ENCODE measurements at regions of chr6 and their contacts with region 1.

Region 1: GRCh38 chr6:79544939-79545450 is 7.8 kb upstream of the LCA5 start:
- DNase-seq: peak; percentile 90 to 93
- H3K4me3 ChIP-seq: no peak overlapping the region
- H3K4me3 Mint-ChIP-seq: peak overlapping the region; percentile 42
- H3K27ac Mint-ChIP-seq: peak overlapping the region; percentile 69
- H3K4me1 ChIP-seq: peaks cover 22% of the 10 kb centered on the region
- H3K4me1 Mint-ChIP-seq: peaks cover 14% of the 10 kb centered on the region
- H3K27me3 ChIP-seq: no peaks in the 10 kb centered on the region
- H3K27me3 Mint-ChIP-seq: no peaks in the 10 kb centered on the region
- CTCF ChIP-seq: peak; percentile 40 to 74

Region 2: GRCh38 chr6:79302341-79302740 is 242.7 kb before region 1 on chr6:
- CTCF ChIA-PET with region 1: no interaction called
- POLR2A ChIA-PET with region 1: no interaction called
- intact Hi-C with region 1: loop called (anchors 5 kb)
- DNase-seq: no peak
- H3K4me3 ChIP-seq: no peak overlapping the region
- H3K4me3 Mint-ChIP-seq: no peak overlapping the region
- H3K27ac Mint-ChIP-seq: peak overlapping the region; percentile 68
- H3K4me1 ChIP-seq: peaks cover 48% of the 10 kb centered on the region
- H3K4me1 Mint-ChIP-seq: peaks cover 15% of the 10 kb centered on the region
- H3K27me3 ChIP-seq: no peaks in the 10 kb centered on the region
- H3K27me3 Mint-ChIP-seq: no peaks in the 10 kb centered on the region
- CTCF ChIP-seq: no peak

Region 3: DNA sequence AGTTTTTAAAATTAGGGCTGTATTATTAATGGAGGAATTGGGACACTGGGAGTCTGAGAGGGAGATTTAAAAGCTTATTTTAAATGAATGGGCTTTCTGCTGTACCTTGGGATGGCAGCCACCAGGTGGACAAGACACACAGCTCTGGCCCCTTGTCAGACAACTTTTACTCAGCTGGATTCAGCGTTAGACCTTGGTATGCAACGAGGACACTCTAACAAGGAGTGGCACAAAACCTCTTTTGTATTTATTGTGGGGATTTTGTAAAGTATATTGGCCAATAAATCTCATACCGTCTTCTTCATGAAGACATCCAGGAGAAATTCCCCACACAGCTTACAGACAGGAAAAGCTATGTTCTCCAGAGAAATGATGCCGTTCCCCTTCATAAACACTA is 113.5 kb before region 1 on chr6:
- CTCF ChIA-PET with region 1: interaction called, 3 read pairs
- POLR2A ChIA-PET with region 1: no interaction called
- intact Hi-C with region 1: loop called (anchors 1 kb)
- DNase-seq: peak; percentile 61 to 69
- H3K4me3 ChIP-seq: no peak overlapping the region
- H3K4me3 Mint-ChIP-seq: peak overlapping the region; percentile 10
- H3K27ac Mint-ChIP-seq: peak overlapping the region; percentile 41
- H3K4me1 ChIP-seq: peaks cover 37% of the 10 kb centered on the region
- H3K4me1 Mint-ChIP-seq: peaks cover 24% of the 10 kb centered on the region
- H3K27me3 ChIP-seq: no peaks in the 10 kb centered on the region
- H3K27me3 Mint-ChIP-seq: no peaks in the 10 kb centered on the region
- CTCF ChIP-seq: peak; percentile 62 to 67

Region 4: GRCh38 chr6:79525272-79526100 is 19.5 kb before region 1 on chr6:
- CTCF ChIA-PET with region 1: no interaction called
- POLR2A ChIA-PET with region 1: interaction called, 5 read pairs
- intact Hi-C with region 1: loop called (anchors 1 kb)
- DNase-seq: peak; percentile 87 to 93
- H3K4me3 ChIP-seq: peak overlapping the region; percentile 17
- H3K4me3 Mint-ChIP-seq: peak overlapping the region; percentile 68
- H3K27ac Mint-ChIP-seq: peak overlapping the region; percentile 84
- H3K4me1 ChIP-seq: peaks cover 52% of the 10 kb centered on the region
- H3K4me1 Mint-ChIP-seq: peaks cover 32% of the 10 kb centered on the region
- H3K27me3 ChIP-seq: no peaks in the 10 kb centered on the region
- H3K27me3 Mint-ChIP-seq: no peaks in the 10 kb centered on the region
- CTCF ChIP-seq: no peak

Region 5: DNA sequence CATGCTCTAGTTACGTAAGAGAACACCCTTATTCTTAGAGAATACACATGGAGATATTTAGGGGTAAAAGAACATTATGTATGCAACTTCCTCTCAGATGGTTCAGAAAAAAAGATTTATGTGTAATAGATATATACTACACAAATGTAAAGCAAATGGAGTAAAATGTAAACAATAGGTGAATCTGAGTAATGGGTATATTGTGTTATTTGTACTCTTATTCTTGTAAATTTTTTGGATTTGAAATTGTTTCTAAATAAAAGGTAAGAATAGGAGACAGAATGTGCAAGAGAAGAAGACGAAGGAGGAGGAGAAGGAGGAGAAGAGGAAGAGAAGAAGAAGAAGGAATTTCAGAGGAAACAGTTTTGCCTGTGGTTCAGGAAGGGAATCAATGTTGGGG is 14.7 kb after region 1 on chr6:
- CTCF ChIA-PET with region 1: no interaction called
- POLR2A ChIA-PET with region 1: no interaction called
- intact Hi-C with region 1: no loop called
- DNase-seq: no peak
- H3K4me3 ChIP-seq: no peak overlapping the region
- H3K4me3 Mint-ChIP-seq: no peak overlapping the region
- H3K27ac Mint-ChIP-seq: peak overlapping the region; percentile 16
- H3K4me1 ChIP-seq: no peaks in the 10 kb centered on the region
- H3K4me1 Mint-ChIP-seq: peaks cover 5% of the 10 kb centered on the region
- H3K27me3 ChIP-seq: no peaks in the 10 kb centered on the region
- H3K27me3 Mint-ChIP-seq: no peaks in the 10 kb centered on the region
- CTCF ChIP-seq: no peak

Region 6: DNA sequence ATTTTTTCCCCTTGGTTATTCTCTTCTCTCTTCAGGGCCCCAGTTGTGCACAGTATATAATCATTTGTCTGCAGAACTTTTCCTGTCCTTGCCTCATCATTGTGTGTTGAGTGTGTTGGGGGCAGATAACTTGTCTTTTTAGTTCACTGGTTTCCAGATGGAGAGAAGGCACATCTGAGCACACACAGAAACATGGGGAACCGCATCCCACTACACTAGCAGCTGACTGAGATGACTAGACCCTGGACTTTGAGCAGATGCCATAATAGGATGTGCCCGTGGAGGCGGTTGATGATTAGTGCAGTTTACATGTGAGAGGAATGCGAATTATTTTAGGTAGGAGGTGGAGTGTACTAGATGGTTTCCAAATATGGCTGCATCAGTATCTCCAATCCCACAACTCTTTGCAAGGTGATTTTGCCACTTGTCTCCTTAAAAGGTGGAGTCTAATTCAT is 59.6 kb after region 1 on chr6:
- CTCF ChIA-PET with region 1: no interaction called
- POLR2A ChIA-PET with region 1: interaction called, 3 read pairs
- intact Hi-C with region 1: loop called (anchors 2 kb)
- DNase-seq: peak; percentile 82 to 90
- H3K4me3 ChIP-seq: no peak overlapping the region
- H3K4me3 Mint-ChIP-seq: peak overlapping the region; percentile 18
- H3K27ac Mint-ChIP-seq: peak overlapping the region; percentile 80
- H3K4me1 ChIP-seq: peaks cover 96% of the 10 kb centered on the region
- H3K4me1 Mint-ChIP-seq: peaks cover 62% of the 10 kb centered on the region
- H3K27me3 ChIP-seq: no peaks in the 10 kb centered on the region
- H3K27me3 Mint-ChIP-seq: no peaks in the 10 kb centered on the region
- CTCF ChIP-seq: no peak

Region 7: GRCh38 chr6:79630883-79631692 is 86.1 kb after region 1 on chr6 and contains the start of gene SH3BGRL2:
- CTCF ChIA-PET with region 1: no interaction called
- POLR2A ChIA-PET with region 1: interaction called, 10 read pairs
- intact Hi-C with region 1: no loop called
- DNase-seq: peak; percentile 88 to 89
- H3K4me3 ChIP-seq: peak within 1 kb of the TSS; percentile 90
- H3K4me3 Mint-ChIP-seq: peak within 1 kb of the TSS; percentile 95
- H3K27ac Mint-ChIP-seq: peak within 1 kb of the TSS; percentile 94
- H3K4me1 ChIP-seq: peaks cover 32% of the 10 kb centered on the region
- H3K4me1 Mint-ChIP-seq: peaks cover 27% of the 10 kb centered on the region
- H3K27me3 ChIP-seq: no peaks in the 10 kb centered on the region
- H3K27me3 Mint-ChIP-seq: no peaks in the 10 kb centered on the region
- CTCF ChIP-seq: no peak
- total RNA-seq, gene SH3BGRL2: 102 and 106 TPM in 2 replicates

Region 8: DNA sequence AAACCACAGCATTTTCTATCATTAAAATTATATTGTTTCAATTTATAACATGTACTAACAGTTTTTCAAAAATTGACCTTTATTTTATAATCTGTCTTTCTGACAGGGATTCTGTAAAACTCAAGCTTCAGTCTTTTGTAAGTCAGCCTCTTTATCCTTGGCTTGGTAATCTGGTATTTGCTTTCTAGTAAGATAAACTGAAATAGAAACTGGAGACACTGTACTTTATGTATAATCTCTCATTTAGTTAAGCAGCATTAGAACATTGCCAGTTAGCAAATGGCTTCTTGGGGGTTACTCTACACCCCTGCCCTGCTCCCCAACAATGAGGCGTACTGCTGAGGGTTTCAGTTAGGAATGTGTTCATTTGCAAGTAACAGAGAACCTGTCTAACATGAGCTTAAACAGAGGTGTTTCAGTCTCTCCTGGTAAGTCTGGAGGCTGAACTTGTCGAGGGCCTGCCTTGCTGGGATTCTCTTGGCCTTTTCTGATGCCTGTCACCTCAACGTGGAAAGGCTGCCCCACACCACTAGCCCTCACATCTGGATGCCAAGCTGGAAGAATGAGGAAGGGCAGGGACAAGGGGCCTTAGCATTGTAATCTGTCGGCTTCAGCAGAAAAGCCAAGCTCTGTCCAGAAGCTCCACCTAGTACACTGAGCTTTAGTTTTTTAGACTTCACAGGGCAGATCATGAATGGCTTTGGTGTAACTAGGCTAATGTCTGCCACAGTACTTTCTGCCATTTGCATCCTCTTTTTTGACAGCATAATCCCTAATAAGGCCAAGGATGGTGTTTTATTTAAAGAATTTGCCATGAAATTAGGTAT is 120.9 kb after region 1 on chr6:
- CTCF ChIA-PET with region 1: no interaction called
- POLR2A ChIA-PET with region 1: no interaction called
- intact Hi-C with region 1: no loop called
- DNase-seq: no peak
- H3K4me3 ChIP-seq: no peak overlapping the region
- H3K4me3 Mint-ChIP-seq: no peak overlapping the region
- H3K27ac Mint-ChIP-seq: no peak overlapping the region
- H3K4me1 ChIP-seq: peaks cover 22% of the 10 kb centered on the region
- H3K4me1 Mint-ChIP-seq: peaks cover 15% of the 10 kb centered on the region
- H3K27me3 ChIP-seq: no peaks in the 10 kb centered on the region
- H3K27me3 Mint-ChIP-seq: no peaks in the 10 kb centered on the region
- CTCF ChIP-seq: no peak

Measured in Caco-2 (cell line).